AG04449 (cell line): ENCODE measurements at regions of chr2 and their contacts with region 1.

Region 1: DNA sequence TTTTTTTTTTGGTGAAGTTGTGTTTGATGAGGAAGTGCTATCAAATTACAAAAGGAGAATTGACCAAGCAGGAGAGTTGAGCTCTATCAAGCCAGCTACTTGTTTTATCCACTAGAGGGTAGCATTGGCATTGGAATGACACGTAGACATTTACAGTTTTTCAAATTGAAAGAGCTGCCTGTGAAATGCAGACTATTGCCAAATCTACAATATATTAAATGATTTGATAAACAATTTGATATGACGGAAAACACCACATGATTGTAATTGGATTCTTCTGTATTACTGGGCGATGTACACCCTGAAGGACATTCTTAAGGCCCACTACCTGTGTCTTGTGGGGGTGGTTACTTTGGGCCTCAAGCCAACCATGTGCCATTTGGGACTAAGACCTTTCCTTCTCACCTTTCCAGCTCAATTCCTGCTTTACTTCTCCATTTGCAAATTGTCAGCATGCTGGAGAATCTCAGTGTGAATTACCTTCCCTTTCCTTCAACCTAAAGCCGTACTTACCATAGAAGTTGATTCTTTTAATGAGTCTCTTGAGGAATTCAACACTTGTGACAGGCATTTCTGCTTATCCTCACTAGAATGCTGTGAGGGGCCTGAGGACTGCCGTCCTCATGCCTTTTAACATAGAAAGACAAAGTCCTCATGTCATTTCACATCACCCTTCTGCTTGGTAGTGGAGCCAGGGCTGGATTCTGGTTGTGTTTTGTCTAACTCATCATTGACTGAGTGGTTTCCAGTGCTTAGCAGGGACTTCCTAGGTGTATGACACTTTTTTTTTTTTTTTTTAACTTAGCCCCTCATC is 134.8 kb upstream of the THUMPD2 start:
- DNase-seq: peak; percentile 56
- H3K4me3 ChIP-seq: no peak overlapping the region
- CTCF ChIP-seq: peak; percentile 54

Region 2: GRCh38 chr2:39304200-39304599 is 609.7 kb before region 1 on chr2:
- CTCF ChIA-PET with region 1: no interaction called
- POLR2A ChIA-PET with region 1: no interaction called
- DNase-seq: peak; percentile 29
- H3K4me3 ChIP-seq: no peak overlapping the region
- CTCF ChIP-seq: no peak

Region 3: GRCh38 chr2:39942950-39943349 is 29.1 kb after region 1 on chr2:
- CTCF ChIA-PET with region 1: no interaction called
- POLR2A ChIA-PET with region 1: no interaction called
- DNase-seq: peak; percentile 50
- H3K4me3 ChIP-seq: no peak overlapping the region
- CTCF ChIP-seq: no peak

Region 4: DNA sequence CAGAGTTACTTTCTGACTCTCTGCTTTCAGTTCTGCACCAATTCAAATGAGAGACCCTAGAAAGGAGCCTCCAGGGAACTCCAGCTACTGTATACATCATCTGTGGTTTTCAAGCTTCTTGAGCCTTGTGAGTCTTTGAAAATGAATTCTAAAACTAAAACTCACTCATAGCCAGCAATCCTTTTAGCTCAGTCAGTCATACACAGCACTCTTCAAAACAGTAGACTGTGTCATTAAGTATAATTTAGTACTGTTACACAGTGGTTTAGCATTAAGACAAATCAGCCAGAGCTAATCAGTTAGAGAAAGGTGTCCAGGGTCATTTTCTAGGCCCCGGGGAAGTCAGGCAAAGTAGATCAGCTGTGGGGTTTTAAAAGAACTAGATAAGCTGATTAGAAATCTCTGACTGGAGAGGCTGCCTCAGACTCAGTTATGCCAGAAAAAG is 187.3 kb after region 1 on chr2:
- CTCF ChIA-PET with region 1: interaction called, 10 read pairs
- POLR2A ChIA-PET with region 1: interaction called, 9 read pairs
- DNase-seq: peak; percentile 87
- H3K4me3 ChIP-seq: no peak overlapping the region
- CTCF ChIP-seq: no peak